ENCODE measurements at regions of chr19 and their contacts with region 1.

Region 1: GRCh38 chr19:32339988-32340874 is 5.2 kb upstream of the ZNF507 start:
- DNase-seq: no peak
- H3K4me3 ChIP-seq: no peak overlapping the region
- H3K27ac ChIP-seq: peak overlapping the region in 2 of 4 donors; percentile 7 to 32
- H3K4me1 ChIP-seq: peaks cover 0 to 22% (median 17%) of the 10 kb centered on the region in 4 donors
- H3K27me3 ChIP-seq: no peaks in the 10 kb centered on the region
- CTCF ChIP-seq: peak; percentile 53 to 76 (median 55)
- EP300 ChIP-seq: no peak
- POLR2A ChIP-seq: no peak

Region 2: GRCh38 chr19:32427536-32427935 is 87.3 kb after region 1 on chr19:
- intact Hi-C with region 1: no loop called
- DNase-seq: no peak
- H3K4me3 ChIP-seq: no peak overlapping the region
- H3K27ac ChIP-seq: no peak overlapping the region
- H3K4me1 ChIP-seq: no peaks in the 10 kb centered on the region
- H3K27me3 ChIP-seq: no peaks in the 10 kb centered on the region
- CTCF ChIP-seq: no peak
- EP300 ChIP-seq: no peak
- POLR2A ChIP-seq: no peak

Region 3: DNA sequence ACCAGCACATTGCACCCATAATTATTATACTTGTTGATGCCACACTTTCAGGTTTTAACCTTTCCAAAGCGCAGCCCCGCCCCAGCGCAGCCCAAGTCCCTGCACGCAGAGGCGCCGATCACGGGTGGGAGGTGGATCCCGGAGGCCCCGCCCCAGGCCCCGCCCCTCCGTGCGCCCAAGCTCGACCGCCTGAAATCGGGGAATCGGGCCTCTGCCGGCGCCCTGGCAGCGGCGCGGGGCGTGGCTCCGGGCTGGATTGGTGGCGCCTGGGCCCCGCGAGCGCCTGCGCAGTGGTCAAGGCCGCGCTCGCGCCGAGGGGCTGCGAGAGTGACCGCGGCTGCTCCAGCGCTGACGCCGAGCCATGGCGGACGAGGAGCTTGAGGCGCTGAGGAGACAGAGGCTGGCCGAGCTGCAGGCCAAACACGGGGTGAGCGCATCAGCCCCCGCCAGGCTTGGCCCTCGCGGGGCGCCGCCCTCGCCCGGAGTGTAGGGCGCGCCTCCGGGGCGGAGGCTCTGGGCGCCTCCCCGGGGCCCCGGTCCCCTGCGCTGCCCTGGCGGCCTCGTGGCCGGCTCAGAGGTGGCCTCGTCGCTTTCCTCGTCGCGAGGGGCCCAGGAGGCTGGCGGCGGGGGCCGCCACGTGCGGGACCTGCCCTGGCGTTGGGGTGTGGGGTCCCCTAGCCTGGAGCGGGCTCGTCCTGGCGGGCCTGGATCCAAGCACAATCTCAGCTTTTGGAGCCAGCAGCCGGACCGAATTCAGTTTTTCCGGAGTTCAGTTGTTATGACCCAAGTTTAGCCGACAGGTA is 240.9 kb after region 1 on chr19 and contains the start of gene PDCD5:
- intact Hi-C with region 1: loop called (anchors 5 kb)
- DNase-seq: peak; percentile 97
- H3K4me3 ChIP-seq: peak within 1 kb of the TSS; percentile 82 to 97 (median 91)
- H3K27ac ChIP-seq: peak within 1 kb of the TSS; percentile 86 to 95 (median 92)
- H3K4me1 ChIP-seq: peaks cover 16 to 23% (median 22%) of the 10 kb centered on the region in 4 donors
- H3K27me3 ChIP-seq: no peaks in the 10 kb centered on the region
- CTCF ChIP-seq: peak in 1 of 3 experiments; percentile 10
- EP300 ChIP-seq: no peak
- POLR2A ChIP-seq: peak; percentile 70
- total RNA-seq, gene PDCD5: 98.8 to 132 (median 112) TPM

Measured in esophagus muscularis mucosa (tissue), 4 donors.